Naive thymus-derived CD4-positive, alpha-beta T cell (primary cell): ENCODE measurements at regions of chr12 and their contacts with region 1.

Region 1: GRCh38 chr12:62522984-62523383 is 56.4 kb downstream of the MON2 start:
- DNase-seq: no peak
- ATAC-seq: peak; percentile 31
- H3K4me3 ChIP-seq: no peak overlapping the region
- H3K4me3 Mint-ChIP-seq: no peak overlapping the region
- H3K27ac ChIP-seq: no peak overlapping the region
- H3K27ac Mint-ChIP-seq: peak overlapping the region in 5 of 9 donors; percentile 23 to 82 (median 67)
- H3K4me1 ChIP-seq: peaks cover 0 to 7% of the 10 kb centered on the region in 2 donors
- H3K4me1 Mint-ChIP-seq: peaks cover 13 to 64% (median 59%) of the 10 kb centered on the region in 7 donors
- H3K27me3 ChIP-seq: no peaks in the 10 kb centered on the region
- H3K27me3 Mint-ChIP-seq: no peaks in the 10 kb centered on the region

Region 2: GRCh38 chr12:62466594-62467491 is 56.1 kb before region 1 on chr12 and contains the start of gene MON2:
- CTCF ChIA-PET with region 1: no interaction called
- POLR2A ChIA-PET with region 1: no interaction called
- intact Hi-C with region 1: loop called in 1 of 2 experiments (anchors 1 kb)
- DNase-seq: peak; percentile 79 to 89 (median 84)
- ATAC-seq: peak; percentile 98
- H3K4me3 ChIP-seq: peak within 1 kb of the TSS; percentile 90
- H3K4me3 Mint-ChIP-seq: peak within 1 kb of the TSS; percentile 85 to 99 (median 94)
- H3K27ac ChIP-seq: peak within 1 kb of the TSS; percentile 88
- H3K27ac Mint-ChIP-seq: peak within 1 kb of the TSS; percentile 86 to 98 (median 96)
- H3K4me1 ChIP-seq: peaks cover 8 to 17% of the 10 kb centered on the region in 2 donors
- H3K4me1 Mint-ChIP-seq: peaks cover 12 to 30% (median 21%) of the 10 kb centered on the region in 7 donors
- H3K27me3 ChIP-seq: peaks cover 0 to 4% of the 10 kb centered on the region in 2 donors
- H3K27me3 Mint-ChIP-seq: peaks cover 0 to 4% (median 3%) of the 10 kb centered on the region in 5 donors
- total RNA-seq, gene MON2: 50.0 to 96.3 (median 76.0) TPM

Region 3: GRCh38 chr12:62724947-62725447 is 202.0 kb after region 1 on chr12:
- CTCF ChIA-PET with region 1: no interaction called
- POLR2A ChIA-PET with region 1: no interaction called
- intact Hi-C with region 1: no loop called
- DNase-seq: no peak
- ATAC-seq: no peak
- H3K4me3 ChIP-seq: no peak overlapping the region
- H3K4me3 Mint-ChIP-seq: no peak overlapping the region
- H3K27ac ChIP-seq: no peak overlapping the region
- H3K27ac Mint-ChIP-seq: no peak overlapping the region
- H3K4me1 ChIP-seq: no peaks in the 10 kb centered on the region
- H3K4me1 Mint-ChIP-seq: peaks cover 0 to 6% (median 0%) of the 10 kb centered on the region in 7 donors
- H3K27me3 ChIP-seq: no peaks in the 10 kb centered on the region
- H3K27me3 Mint-ChIP-seq: peaks cover 0 to 10% (median 4%) of the 10 kb centered on the region in 5 donors

Region 4: GRCh38 chr12:62793256-62794217 is 270.6 kb after region 1 on chr12:
- CTCF ChIA-PET with region 1: interaction called, 13 read pairs
- POLR2A ChIA-PET with region 1: no interaction called
- intact Hi-C with region 1: loop called in 1 of 2 experiments (anchors 1 kb)
- DNase-seq: peak; percentile 32 to 77 (median 62)
- ATAC-seq: peak; percentile 86
- H3K4me3 ChIP-seq: no peak overlapping the region
- H3K4me3 Mint-ChIP-seq: no peak overlapping the region
- H3K27ac ChIP-seq: no peak overlapping the region
- H3K27ac Mint-ChIP-seq: no peak overlapping the region
- H3K4me1 ChIP-seq: no peaks in the 10 kb centered on the region
- H3K4me1 Mint-ChIP-seq: peaks cover 0 to 4% (median 0%) of the 10 kb centered on the region in 7 donors
- H3K27me3 ChIP-seq: no peaks in the 10 kb centered on the region
- H3K27me3 Mint-ChIP-seq: peaks cover 0 to 21% (median 0%) of the 10 kb centered on the region in 5 donors

Region 5: GRCh38 chr12:62799126-62799736 is 276.2 kb after region 1 on chr12:
- CTCF ChIA-PET with region 1: interaction called, 13 read pairs
- POLR2A ChIA-PET with region 1: no interaction called
- intact Hi-C with region 1: loop called (anchors 1 kb)
- DNase-seq: peak in 8 of 9 donors; percentile 5 to 53 (median 40)
- ATAC-seq: peak; percentile 81
- H3K4me3 ChIP-seq: no peak overlapping the region
- H3K4me3 Mint-ChIP-seq: no peak overlapping the region
- H3K27ac ChIP-seq: no peak overlapping the region
- H3K27ac Mint-ChIP-seq: no peak overlapping the region
- H3K4me1 ChIP-seq: no peaks in the 10 kb centered on the region
- H3K4me1 Mint-ChIP-seq: no peaks in the 10 kb centered on the region
- H3K27me3 ChIP-seq: no peaks in the 10 kb centered on the region
- H3K27me3 Mint-ChIP-seq: peaks cover 0 to 14% (median 0%) of the 10 kb centered on the region in 5 donors